IMR-90 (cell line): ENCODE measurements at regions of chr15 and their contacts with region 1.

Region 1: GRCh38 chr15:60283936-60284335 is 113.8 kb downstream of the ANXA2 start:
- DNase-seq: no peak
- ATAC-seq: no peak
- H3K4me3 ChIP-seq: no peak overlapping the region
- H3K27ac ChIP-seq: no peak overlapping the region
- H3K4me1 ChIP-seq: no peaks in the 10 kb centered on the region
- H3K27me3 ChIP-seq: peaks cover 3% of the 10 kb centered on the region; the same call in 1 of the 2 replicates
- CTCF ChIP-seq: no peak
- POLR2A ChIP-seq: no peak
- RAD21 ChIP-seq: no peak

Region 2: DNA sequence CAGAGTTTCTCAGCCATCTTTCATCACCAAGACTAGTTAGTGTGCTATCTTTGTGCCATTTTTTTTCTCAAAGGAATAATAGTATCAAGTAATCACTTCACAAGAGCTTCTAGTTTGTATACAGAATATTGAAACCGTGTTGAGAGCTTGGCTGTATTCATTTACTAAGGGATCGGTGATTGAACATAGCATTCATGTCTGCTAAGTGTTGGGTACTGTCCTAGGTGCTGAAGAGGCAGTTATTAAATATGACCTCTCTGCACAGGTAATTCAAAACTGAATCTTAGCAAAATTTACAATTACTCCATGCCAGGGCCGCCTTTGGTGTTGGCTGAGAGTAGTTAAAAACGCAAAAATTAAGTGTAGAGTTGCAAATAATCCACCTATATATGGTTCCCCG is 1300.5 kb after region 1 on chr15:
- CTCF ChIA-PET with region 1: no interaction called
- POLR2A ChIA-PET with region 1: no interaction called
- dilution Hi-C with region 1: no loop called
- in situ Hi-C with region 1: no loop called
- intact Hi-C with region 1: loop called (anchors 5 kb)
- DNase-seq: no peak
- ATAC-seq: no peak
- H3K4me3 ChIP-seq: no peak overlapping the region
- H3K27ac ChIP-seq: no peak overlapping the region
- H3K4me1 ChIP-seq: no peaks in the 10 kb centered on the region
- H3K27me3 ChIP-seq: no peaks in the 10 kb centered on the region
- CTCF ChIP-seq: no peak
- POLR2A ChIP-seq: no peak
- RAD21 ChIP-seq: no peak